Transverse colon (tissue), 4 donors: ENCODE measurements at regions of chr1 and their contacts with region 1.

Region 1: DNA sequence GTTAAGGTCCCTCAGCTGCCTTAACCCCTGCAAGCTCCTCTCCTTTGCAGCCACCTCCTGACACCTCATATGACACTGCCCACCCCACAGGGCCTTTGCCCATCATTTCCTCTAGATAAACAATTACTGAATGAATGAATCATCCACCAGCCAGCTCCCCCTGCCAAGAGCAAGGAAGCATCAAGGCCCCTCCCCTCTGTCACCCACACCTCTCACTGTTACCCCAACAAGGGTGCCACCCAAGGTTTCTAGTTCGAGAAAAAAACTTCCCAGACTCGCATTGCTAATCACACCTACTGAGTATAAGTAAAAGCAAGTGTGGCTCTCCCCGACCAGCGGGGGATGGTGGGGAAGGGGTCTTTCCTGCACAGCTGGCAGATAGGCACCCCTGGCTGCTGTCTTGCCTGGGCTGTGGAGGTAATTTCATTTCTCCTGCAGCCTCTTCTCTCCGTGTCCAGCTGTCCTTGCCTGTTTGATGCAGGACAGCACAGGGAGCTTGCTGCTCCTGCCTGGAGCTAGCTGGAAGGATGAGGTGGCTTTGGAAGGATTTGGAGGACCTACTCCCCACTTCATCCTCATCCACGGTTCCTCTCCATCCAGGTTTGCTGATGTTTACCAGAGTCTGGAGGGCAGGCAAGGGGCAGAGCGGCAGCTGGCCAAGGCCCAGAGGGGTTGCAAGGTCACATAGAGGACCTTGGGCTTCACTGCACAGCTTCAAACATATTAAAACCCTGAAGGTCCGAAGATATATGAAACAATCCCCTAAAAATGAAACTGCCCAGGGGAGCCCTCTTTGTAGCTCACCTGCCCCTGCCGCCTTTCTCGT is 33.1 kb upstream of the LBR start:
- DNase-seq: no peak
- H3K4me3 ChIP-seq: no peak overlapping the region
- H3K27ac ChIP-seq: peak overlapping the region; percentile 67 to 92 (median 84)
- H3K4me1 ChIP-seq: peaks cover 16 to 52% (median 44%) of the 10 kb centered on the region in 4 donors
- H3K27me3 ChIP-seq: no peaks in the 10 kb centered on the region
- CTCF ChIP-seq: no peak
- EP300 ChIP-seq: no peak
- POLR2A ChIP-seq: no peak

Region 2: GRCh38 chr1:225260319-225260718 is 200.6 kb before region 1 on chr1:
- in situ Hi-C with region 1: no loop called
- intact Hi-C with region 1: no loop called
- DNase-seq: no peak
- H3K4me3 ChIP-seq: no peak overlapping the region
- H3K27ac ChIP-seq: no peak overlapping the region
- H3K4me1 ChIP-seq: no peaks in the 10 kb centered on the region
- H3K27me3 ChIP-seq: no peaks in the 10 kb centered on the region
- CTCF ChIP-seq: no peak
- EP300 ChIP-seq: no peak
- POLR2A ChIP-seq: no peak

Region 3: DNA sequence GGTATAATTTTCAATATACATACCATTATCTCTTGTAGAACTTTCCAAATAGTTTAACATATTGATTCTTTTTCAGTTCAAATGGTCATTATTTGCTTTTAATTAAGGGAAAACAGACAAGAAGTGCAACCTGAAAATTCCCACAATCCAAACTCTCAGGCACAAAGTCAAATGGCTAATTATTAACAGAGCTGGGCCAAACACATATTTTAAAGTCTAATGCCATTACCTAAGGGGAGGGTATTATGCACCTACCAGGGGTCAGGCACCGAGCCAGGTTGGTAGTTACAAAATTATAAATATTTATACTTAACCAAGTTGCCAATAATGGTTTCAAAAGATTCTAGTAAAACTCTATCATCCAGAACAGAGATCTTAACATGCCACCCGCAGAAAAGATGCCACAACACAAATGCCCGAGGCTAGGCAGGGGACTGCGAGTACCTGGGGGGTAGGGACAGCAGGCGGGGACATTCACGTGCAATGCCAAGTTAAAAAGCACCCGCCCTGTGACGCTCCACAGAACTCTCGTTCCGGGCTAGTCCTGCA is 48.1 kb before region 1 on chr1:
- in situ Hi-C with region 1: no loop called
- intact Hi-C with region 1: no loop called
- DNase-seq: no peak
- H3K4me3 ChIP-seq: no peak overlapping the region
- H3K27ac ChIP-seq: peak overlapping the region in 2 of 4 donors; percentile 27 to 37
- H3K4me1 ChIP-seq: peaks cover 0 to 24% (median 13%) of the 10 kb centered on the region in 4 donors
- H3K27me3 ChIP-seq: no peaks in the 10 kb centered on the region
- CTCF ChIP-seq: no peak
- EP300 ChIP-seq: no peak
- POLR2A ChIP-seq: no peak

Region 4: GRCh38 chr1:225474986-225475820 is 14.3 kb after region 1 on chr1:
- in situ Hi-C with region 1: no loop called
- intact Hi-C with region 1: no loop called
- DNase-seq: peak; percentile 66
- H3K4me3 ChIP-seq: no peak overlapping the region
- H3K27ac ChIP-seq: peak overlapping the region in 2 of 4 donors; percentile 45 to 59
- H3K4me1 ChIP-seq: peaks cover 7 to 22% (median 12%) of the 10 kb centered on the region in 4 donors
- H3K27me3 ChIP-seq: no peaks in the 10 kb centered on the region
- CTCF ChIP-seq: peak; percentile 100
- EP300 ChIP-seq: no peak
- POLR2A ChIP-seq: no peak

Region 5: GRCh38 chr1:226186124-226187018 is 725.4 kb after region 1 on chr1 and contains the start of gene ACBD3:
- in situ Hi-C with region 1: no loop called
- intact Hi-C with region 1: loop called (anchors 5 kb)
- DNase-seq: peak; percentile 90
- H3K4me3 ChIP-seq: peak within 1 kb of the TSS; percentile 66 to 97 (median 83)
- H3K27ac ChIP-seq: peak within 1 kb of the TSS; percentile 93 to 98 (median 95)
- H3K4me1 ChIP-seq: peaks cover 28 to 48% (median 36%) of the 10 kb centered on the region in 4 donors
- H3K27me3 ChIP-seq: no peaks in the 10 kb centered on the region
- CTCF ChIP-seq: peak in 3 of 5 experiments; percentile 21 to 47 (median 39)
- EP300 ChIP-seq: no peak
- POLR2A ChIP-seq: peak; percentile 87
- total RNA-seq, gene ACBD3: 19.3 to 44.6 (median 30.7) TPM

Region 6: DNA sequence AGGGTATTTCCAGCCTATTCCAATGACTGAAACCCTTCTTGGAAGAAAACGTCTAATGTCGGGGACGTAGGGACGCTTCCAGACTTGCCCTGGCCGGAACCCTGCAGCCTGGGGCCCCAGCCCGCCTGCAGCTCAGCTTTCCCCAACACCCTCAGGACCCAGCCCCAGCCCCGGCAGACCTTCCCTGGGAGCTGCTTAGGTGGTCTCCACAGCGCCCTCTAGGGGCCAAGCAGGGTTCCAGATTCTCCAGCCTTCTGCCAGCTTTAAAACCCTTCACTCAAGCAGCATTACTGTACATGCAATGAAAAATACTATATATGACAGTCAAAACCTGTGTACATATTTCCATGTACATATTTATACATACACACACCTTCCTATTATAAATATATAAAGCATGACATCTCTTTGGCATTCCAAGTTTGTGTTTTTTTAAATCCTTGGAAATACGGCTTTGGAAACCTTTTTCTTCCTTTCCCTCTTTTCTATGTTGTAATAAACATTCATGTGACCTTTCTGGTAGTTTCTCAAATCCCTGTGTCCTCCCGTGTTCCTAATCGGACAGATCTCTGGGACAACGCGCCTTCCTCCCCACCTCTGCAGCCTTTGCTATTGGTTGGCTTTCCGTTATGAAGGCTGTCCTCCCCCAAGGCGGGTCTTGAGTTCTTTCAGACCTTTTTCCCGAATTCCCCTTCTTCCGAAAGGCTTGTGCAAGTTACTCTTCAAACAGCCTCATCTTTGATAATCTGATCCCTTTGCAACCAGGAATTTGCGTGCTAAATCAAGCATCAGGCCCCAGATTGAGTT is 1148.0 kb after region 1 on chr1:
- in situ Hi-C with region 1: no loop called
- intact Hi-C with region 1: no loop called
- DNase-seq: peak; percentile 74
- H3K4me3 ChIP-seq: no peak overlapping the region
- H3K27ac ChIP-seq: no peak overlapping the region
- H3K4me1 ChIP-seq: peaks cover under 1 to 6% (median 3%) of the 10 kb centered on the region in 4 donors
- H3K27me3 ChIP-seq: no peaks in the 10 kb centered on the region
- CTCF ChIP-seq: peak; percentile 74 to 90 (median 84)
- EP300 ChIP-seq: no peak
- POLR2A ChIP-seq: no peak